A549 (cell line): ENCODE measurements at regions of chr14 and their contacts with region 1.

Region 1: DNA sequence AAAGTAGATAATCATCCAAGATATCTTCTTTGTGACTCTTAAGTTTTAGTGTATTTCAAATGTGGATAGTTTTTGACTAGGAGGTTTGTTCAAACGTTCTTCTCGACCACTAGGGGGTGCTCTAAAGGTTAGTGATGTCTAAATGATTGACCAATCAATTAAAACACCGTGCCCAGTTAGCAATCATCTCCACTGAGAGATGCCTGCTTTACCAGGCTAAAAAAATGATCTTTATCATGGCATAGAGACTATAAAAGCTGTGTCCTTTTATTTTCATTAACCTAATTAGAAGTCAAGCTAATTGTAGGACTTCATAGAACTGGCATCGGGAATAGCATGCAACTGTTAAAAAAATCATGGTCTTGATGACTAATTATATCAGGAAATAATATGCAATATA is 153.9 kb downstream of the PRKCH start:
- DNase-seq: peak; percentile 53 to 80
- ATAC-seq: no peak
- H3K4me3 ChIP-seq: no peak overlapping the region
- H3K27ac ChIP-seq: peak overlapping the region; percentile 95 to 96
- H3K4me1 ChIP-seq: peaks cover 88% of the 10 kb centered on the region
- CTCF ChIP-seq: peak; percentile 81
- EP300 ChIP-seq: no peak
- POLR2A ChIP-seq: no peak
- RAD21 ChIP-seq: peak; percentile 67 to 72

Region 2: GRCh38 chr14:61435546-61436337 is 39.6 kb before region 1 on chr14:
- CTCF ChIA-PET with region 1: no interaction called
- POLR2A ChIA-PET with region 1: no interaction called
- DNase-seq: no peak
- ATAC-seq: no peak
- H3K4me3 ChIP-seq: no peak overlapping the region
- H3K27ac ChIP-seq: peak overlapping the region; percentile 52 to 76; a peak in 4 of 6 replicates
- H3K4me1 ChIP-seq: peaks cover 61% of the 10 kb centered on the region
- CTCF ChIP-seq: no peak
- EP300 ChIP-seq: no peak
- POLR2A ChIP-seq: no peak
- RAD21 ChIP-seq: no peak

Region 3: DNA sequence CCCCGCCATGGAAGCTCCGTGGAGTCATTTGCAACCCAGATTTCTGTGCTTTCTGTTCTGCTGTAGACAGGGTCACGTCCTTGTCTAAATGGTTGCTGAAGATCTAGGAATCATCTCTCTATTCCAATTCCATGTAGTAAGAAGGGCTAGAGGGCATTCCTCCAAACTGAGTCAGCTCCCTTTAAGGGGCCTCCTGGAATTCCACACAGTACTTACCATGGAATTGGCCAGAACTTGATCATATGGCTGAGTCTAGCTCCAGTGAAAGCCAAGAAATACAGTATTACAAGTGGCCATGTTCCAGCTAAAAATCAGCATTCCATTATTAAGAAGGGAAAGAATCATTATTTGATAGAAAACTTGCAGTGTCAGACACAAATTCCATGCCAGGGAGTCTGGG is 17.9 kb after region 1 on chr14:
- CTCF ChIA-PET with region 1: interaction called, 20 read pairs
- POLR2A ChIA-PET with region 1: no interaction called
- DNase-seq: peak in 1 of 2 experiments; percentile 48
- ATAC-seq: peak in 1 of 2 experiments; percentile 70; a peak in 3 of 6 replicates
- H3K4me3 ChIP-seq: no peak overlapping the region
- H3K27ac ChIP-seq: peak overlapping the region; percentile 78 to 87
- H3K4me1 ChIP-seq: peaks cover 57% of the 10 kb centered on the region
- CTCF ChIP-seq: no peak
- EP300 ChIP-seq: no peak
- POLR2A ChIP-seq: no peak
- RAD21 ChIP-seq: no peak

Region 4: DNA sequence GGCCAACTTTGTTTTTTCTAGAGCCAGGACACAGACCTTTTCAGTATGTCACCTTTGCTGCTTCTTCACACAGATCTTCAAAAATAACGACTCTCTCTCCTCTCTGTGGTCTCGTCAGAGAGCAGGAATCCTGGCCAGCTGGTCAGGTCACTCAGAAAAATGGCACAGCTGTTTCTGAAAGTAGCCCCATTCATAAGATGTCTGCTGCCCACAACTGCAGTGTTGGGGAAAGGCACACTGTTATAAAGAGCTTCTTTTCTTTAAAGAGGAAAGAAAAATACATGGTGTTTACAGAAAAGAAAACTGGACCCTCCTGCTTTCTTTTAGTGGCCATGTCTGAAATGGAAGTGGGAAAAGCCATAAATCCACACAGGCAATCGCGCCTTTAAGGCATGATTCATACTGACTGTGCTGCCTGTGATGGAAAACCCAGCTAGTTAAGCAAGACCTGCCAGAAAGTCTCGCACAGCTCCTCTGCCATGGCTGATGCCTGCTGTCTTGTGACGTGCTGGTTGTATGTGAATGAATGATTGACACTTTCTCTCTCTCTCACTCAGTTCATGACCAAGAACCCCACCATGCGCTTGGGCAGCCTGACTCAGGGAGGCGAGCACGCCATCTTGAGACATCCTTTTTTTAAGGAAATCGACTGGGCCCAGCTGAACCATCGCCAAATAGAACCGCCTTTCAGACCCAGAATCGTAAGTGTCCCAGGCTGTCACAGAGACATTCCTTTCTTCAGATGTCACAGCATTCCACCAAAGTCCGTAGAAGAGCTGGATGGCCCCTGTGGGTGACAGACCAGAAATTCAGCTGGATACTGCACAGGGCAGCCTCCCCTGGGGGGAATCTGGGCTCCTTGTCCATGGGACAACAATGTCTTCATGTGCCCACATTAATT is 72.1 kb after region 1 on chr14:
- CTCF ChIA-PET with region 1: interaction called, 27 read pairs
- POLR2A ChIA-PET with region 1: no interaction called
- DNase-seq: peak; percentile 62 to 74
- ATAC-seq: peak; percentile 81 to 85
- H3K4me3 ChIP-seq: no peak overlapping the region
- H3K27ac ChIP-seq: peak overlapping the region; percentile 96 to 99
- H3K4me1 ChIP-seq: peaks cover 69% of the 10 kb centered on the region
- CTCF ChIP-seq: no peak
- EP300 ChIP-seq: peak in 1 of 2 experiments; percentile 36; a peak in 1 of 5 replicates
- POLR2A ChIP-seq: no peak
- RAD21 ChIP-seq: no peak

Region 5: DNA sequence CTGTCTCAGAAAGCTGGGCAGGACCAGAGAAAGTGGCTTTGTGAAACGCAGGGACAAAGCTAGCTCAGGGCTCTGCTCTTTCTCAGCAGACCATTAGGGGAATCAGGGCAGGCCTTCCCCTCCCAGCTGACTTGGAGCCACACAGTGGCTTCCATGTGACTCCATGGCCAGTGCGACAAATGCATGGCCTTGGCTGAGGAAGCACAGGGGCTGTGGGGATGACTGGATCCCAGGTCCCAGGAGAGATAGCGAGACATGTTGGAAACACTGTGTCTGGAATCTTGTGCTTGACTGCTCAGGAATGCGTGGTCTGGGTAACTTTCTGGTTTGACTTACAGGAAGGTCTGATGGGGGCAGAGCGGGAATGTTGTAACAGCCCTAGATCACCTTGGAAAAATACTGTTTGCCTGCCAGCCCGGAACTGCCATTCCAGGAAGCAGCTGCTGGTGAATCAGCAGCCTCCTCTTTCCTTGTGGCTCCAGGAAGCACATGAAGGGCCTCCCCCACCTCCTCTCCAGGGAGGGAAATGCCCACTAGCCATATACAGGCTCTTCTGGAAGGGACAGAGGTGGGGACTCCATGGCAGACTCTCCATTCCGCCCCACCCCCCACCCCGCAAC is 86.5 kb after region 1 on chr14:
- CTCF ChIA-PET with region 1: interaction called, 28 read pairs
- POLR2A ChIA-PET with region 1: interaction called, 37 read pairs
- DNase-seq: peak; percentile 77 to 95
- ATAC-seq: peak; percentile 65 to 67
- H3K4me3 ChIP-seq: no peak overlapping the region
- H3K27ac ChIP-seq: peak overlapping the region; percentile 96 to 99
- H3K4me1 ChIP-seq: peaks cover 92% of the 10 kb centered on the region
- CTCF ChIP-seq: no peak
- EP300 ChIP-seq: peak; percentile 87 to 95; a peak in 4 of 5 replicates
- POLR2A ChIP-seq: no peak; the same call in 1 of the 2 replicates
- RAD21 ChIP-seq: peak; percentile 34 to 65

Region 6: GRCh38 chr14:61730756-61731373 is 255.5 kb after region 1 on chr14:
- CTCF ChIA-PET with region 1: interaction called, 13 read pairs
- POLR2A ChIA-PET with region 1: no interaction called
- DNase-seq: no peak
- ATAC-seq: no peak
- H3K4me3 ChIP-seq: no peak overlapping the region
- H3K27ac ChIP-seq: peak overlapping the region in 1 of 2 experiments; percentile 5; a peak in 2 of 6 replicates
- H3K4me1 ChIP-seq: peaks cover 93% of the 10 kb centered on the region
- CTCF ChIP-seq: peak; percentile 66
- EP300 ChIP-seq: no peak
- POLR2A ChIP-seq: no peak
- RAD21 ChIP-seq: peak; percentile 69 to 75

Region 7: DNA sequence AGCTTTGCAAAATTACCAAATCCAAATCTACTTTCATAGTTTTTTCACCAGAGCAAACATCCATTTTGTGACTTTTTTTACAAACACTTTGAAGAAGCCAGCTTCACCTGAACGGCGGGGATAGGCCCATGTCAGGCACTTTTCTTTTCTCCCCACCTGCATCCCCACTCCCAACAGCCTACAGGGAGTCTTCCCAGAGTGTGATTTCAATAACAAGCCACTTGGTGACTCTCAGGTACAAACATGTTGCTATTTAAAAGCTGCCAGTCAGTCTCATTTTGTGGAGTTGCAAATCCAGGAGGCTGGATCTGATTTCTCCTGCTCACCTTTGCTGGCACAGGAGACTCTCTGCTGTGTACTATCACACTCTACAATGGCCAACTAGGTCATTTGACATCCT is 1284.5 kb after region 1 on chr14:
- CTCF ChIA-PET with region 1: no interaction called
- POLR2A ChIA-PET with region 1: no interaction called
- DNase-seq: no peak
- ATAC-seq: no peak
- H3K4me3 ChIP-seq: no peak overlapping the region
- H3K27ac ChIP-seq: no peak overlapping the region
- H3K4me1 ChIP-seq: no peaks in the 10 kb centered on the region
- CTCF ChIP-seq: no peak
- EP300 ChIP-seq: no peak
- POLR2A ChIP-seq: no peak
- RAD21 ChIP-seq: no peak